MCF 10A (cell line): ENCODE measurements at regions of chr5 and their contacts with region 1.

Region 1: GRCh38 chr5:73558950-73559349 is 6.5 kb downstream of the ANKRA2 start:
- DNase-seq: peak; percentile 27
- H3K4me3 Mint-ChIP-seq: no peak overlapping the region
- H3K27ac Mint-ChIP-seq: no peak overlapping the region
- H3K4me1 Mint-ChIP-seq: peaks cover 9% of the 10 kb centered on the region
- H3K27me3 Mint-ChIP-seq: no peaks in the 10 kb centered on the region
- CTCF ChIP-seq: no peak

Region 2: GRCh38 chr5:72441861-72442540 is 1116.9 kb before region 1 on chr5:
- CTCF ChIA-PET with region 1: no interaction called
- POLR2A ChIA-PET with region 1: no interaction called
- intact Hi-C with region 1: no loop called
- DNase-seq: peak; percentile 84
- H3K4me3 Mint-ChIP-seq: no peak overlapping the region
- H3K27ac Mint-ChIP-seq: peak overlapping the region; percentile 76
- H3K4me1 Mint-ChIP-seq: peaks cover 28% of the 10 kb centered on the region
- H3K27me3 Mint-ChIP-seq: no peaks in the 10 kb centered on the region
- CTCF ChIP-seq: no peak

Region 3: GRCh38 chr5:73540192-73540591 is 18.8 kb before region 1 on chr5:
- CTCF ChIA-PET with region 1: interaction called, 12 read pairs
- POLR2A ChIA-PET with region 1: interaction called, 11 read pairs
- intact Hi-C with region 1: no loop called
- DNase-seq: peak; percentile 68
- H3K4me3 Mint-ChIP-seq: no peak overlapping the region
- H3K27ac Mint-ChIP-seq: peak overlapping the region; percentile 61
- H3K4me1 Mint-ChIP-seq: peaks cover 34% of the 10 kb centered on the region
- H3K27me3 Mint-ChIP-seq: no peaks in the 10 kb centered on the region
- CTCF ChIP-seq: no peak

Region 4: GRCh38 chr5:73617510-73618279 is 58.7 kb after region 1 on chr5:
- CTCF ChIA-PET with region 1: no interaction called
- POLR2A ChIA-PET with region 1: no interaction called
- intact Hi-C with region 1: no loop called
- DNase-seq: no peak
- H3K4me3 Mint-ChIP-seq: no peak overlapping the region
- H3K27ac Mint-ChIP-seq: peak overlapping the region; percentile 4
- H3K4me1 Mint-ChIP-seq: peaks cover 13% of the 10 kb centered on the region
- H3K27me3 Mint-ChIP-seq: no peaks in the 10 kb centered on the region
- CTCF ChIP-seq: no peak